Activated CD4-positive, alpha-beta memory T cell treated with anti-CD3 and anti-CD28 coated beads for 36 hours (primary cell): ENCODE measurements at regions of chr12 and their contacts with region 1.

Region 1: GRCh38 chr12:104286538-104287482 is 16.7 kb upstream of the EID3 start:
- DNase-seq: peak; percentile 94
- H3K4me3 Mint-ChIP-seq: peak overlapping the region; percentile 98
- H3K27ac Mint-ChIP-seq: peak overlapping the region; percentile 99
- H3K4me1 Mint-ChIP-seq: peaks cover 16% of the 10 kb centered on the region
- H3K27me3 Mint-ChIP-seq: no peaks in the 10 kb centered on the region

Region 2: DNA sequence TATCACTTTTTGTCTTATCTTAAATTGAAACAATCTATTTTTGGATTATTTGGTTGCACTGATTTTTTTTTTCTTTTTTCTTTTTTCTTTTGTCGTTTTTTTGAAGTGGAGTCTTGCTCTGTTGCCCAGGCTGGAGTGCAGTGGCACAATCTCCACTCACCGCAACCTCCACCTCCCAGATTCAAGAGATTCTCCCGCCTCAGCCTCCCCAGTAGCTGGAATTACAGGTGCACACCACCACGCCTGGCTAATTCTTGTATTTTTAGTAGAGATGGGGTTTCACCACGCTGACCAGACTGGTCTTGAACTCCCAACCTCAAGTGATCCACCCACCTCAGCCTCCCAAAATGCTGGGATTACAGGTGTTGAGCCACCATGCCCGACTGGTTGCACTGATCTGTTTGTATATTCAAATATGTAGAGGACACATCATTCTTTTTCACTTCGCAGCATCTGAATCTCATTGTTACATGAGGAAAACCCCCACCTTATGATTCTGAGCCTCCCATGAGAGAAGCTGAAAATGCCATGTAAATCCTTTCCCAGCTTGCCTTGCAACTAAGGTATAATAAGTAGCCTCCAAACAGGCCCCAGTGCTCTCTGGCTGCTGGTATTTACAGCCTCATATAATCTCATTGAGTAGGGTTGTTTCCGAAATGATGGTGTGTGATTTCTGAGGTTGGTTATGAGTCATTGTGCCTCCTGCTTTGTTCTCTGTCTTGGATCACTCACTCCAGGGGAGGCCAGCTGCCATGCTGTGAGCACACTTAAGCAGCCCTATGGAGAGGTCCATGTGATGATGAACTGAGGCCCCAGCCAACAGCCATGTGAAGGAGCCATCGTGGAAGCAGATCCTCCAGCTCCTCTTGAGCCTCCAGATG is 361.8 kb before region 1 on chr12:
- CTCF ChIA-PET with region 1: no interaction called
- POLR2A ChIA-PET with region 1: interaction called, 6 read pairs
- intact Hi-C with region 1: loop called (anchors 1 kb)
- DNase-seq: peak; percentile 80
- H3K4me3 Mint-ChIP-seq: peak overlapping the region; percentile 78
- H3K27ac Mint-ChIP-seq: peak overlapping the region; percentile 94
- H3K4me1 Mint-ChIP-seq: peaks cover 39% of the 10 kb centered on the region
- H3K27me3 Mint-ChIP-seq: no peaks in the 10 kb centered on the region

Region 3: DNA sequence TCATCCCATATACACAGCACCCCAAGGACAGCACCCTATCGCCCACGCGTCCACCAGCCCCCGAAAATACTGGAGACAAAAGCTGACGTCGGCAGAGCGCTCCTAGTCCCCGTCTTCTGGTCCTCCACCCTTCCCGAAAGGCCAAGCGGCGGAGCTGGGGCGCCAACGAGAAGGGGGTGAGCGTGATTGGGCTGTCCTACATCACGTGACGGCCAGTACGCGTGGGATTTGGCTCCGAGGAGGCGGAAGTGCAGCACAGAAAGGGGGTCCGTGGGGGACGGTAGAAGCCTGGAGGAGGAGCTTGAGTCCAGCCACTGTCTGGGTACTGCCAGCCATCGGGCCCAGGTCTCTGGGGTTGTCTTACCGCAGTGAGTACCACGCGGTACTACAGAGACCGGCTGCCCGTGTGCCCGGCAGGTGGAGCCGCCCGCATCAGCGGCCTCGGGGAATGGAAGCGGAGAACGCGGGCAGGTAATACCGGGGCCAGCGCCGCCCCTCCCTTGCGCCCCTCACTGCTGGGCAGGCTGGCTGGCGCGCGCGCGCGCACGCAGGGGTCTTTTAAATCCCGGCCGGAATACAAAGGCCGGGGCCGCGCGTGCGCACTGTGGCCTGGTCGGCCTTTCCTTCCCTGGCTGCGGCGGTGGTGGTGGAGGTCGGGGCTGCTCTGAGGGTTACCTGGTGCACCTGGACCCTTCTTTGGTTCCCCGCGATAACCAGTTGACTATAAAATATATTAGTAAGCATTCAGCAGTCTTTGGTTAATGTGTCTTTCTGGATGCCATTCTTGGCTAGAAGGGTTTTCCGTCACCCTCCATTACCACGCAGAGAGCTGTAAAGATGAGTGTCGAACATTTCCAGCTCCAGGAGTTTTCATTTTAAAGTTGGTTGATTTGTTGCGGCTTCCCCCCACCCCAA is 321.0 kb before region 1 on chr12 and contains the start of gene TDG:
- CTCF ChIA-PET with region 1: interaction called, 3 read pairs
- POLR2A ChIA-PET with region 1: interaction called, 3 read pairs
- intact Hi-C with region 1: loop called (anchors 5 kb)
- DNase-seq: peak; percentile 99
- H3K4me3 Mint-ChIP-seq: peak within 1 kb of the TSS; percentile 96
- H3K27ac Mint-ChIP-seq: peak within 1 kb of the TSS; percentile 96
- H3K4me1 Mint-ChIP-seq: peaks cover 53% of the 10 kb centered on the region
- H3K27me3 Mint-ChIP-seq: no peaks in the 10 kb centered on the region
- total RNA-seq, gene TDG: 29.1 to 29.7 TPM

Region 4: DNA sequence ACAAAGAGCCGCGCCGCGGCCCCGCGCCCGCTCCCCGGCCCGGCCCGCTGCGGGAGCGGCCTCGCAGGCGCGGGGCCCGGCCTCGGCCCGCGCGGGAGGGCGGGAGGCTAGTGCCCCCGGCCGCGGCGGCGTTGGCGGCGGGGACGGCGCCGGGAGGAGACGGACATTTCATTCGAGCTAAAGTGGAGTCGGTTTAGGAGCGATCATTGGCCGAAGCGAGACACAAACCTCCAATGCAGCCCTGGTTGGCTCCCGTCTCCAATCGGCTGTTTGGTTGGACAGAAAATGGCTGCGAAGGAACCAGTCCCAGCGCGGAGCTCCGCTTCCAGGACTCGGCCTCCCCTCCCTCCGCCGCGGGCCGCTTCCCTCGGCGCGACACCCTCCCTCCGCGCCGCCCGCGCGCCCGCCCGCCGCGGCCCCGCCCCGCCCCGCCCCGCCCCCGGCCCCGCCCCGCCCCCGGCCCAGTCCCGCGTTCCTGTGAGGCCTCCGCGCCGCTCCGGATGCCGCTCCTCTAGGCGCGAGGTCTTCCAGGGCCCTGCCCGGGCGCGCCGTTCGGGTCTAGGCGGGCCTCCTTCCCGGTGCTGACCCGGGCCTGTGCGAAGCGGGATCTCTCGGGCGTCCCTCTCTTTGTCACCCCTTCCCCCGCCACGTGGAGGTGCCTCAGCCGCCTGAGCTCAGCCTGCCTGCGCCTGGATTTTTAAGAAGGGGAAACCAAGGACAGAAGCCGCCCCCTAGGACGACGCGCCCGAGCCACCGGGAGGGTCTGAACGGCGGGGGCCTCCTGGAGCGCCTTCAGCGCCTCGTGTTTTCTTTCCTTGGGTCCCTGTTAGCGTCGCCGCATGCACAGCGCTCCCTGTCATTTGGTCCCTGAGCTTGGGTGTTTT is 148.7 kb before region 1 on chr12 and contains the start of gene NFYB:
- CTCF ChIA-PET with region 1: no interaction called
- POLR2A ChIA-PET with region 1: interaction called, 11 read pairs
- intact Hi-C with region 1: loop called (anchors 2 kb)
- DNase-seq: peak; percentile 95
- H3K4me3 Mint-ChIP-seq: peak within 1 kb of the TSS; percentile 83
- H3K27ac Mint-ChIP-seq: peak within 1 kb of the TSS; percentile 84
- H3K4me1 Mint-ChIP-seq: peaks cover 13% of the 10 kb centered on the region
- H3K27me3 Mint-ChIP-seq: no peaks in the 10 kb centered on the region
- total RNA-seq, gene NFYB: 23.6 to 24.5 TPM

Region 5: GRCh38 chr12:104303538-104304151 is 16.8 kb after region 1 on chr12 and contains the start of gene EID3:
- CTCF ChIA-PET with region 1: interaction called, 20 read pairs
- POLR2A ChIA-PET with region 1: interaction called, 46 read pairs
- intact Hi-C with region 1: loop called (anchors 1 kb)
- DNase-seq: peak; percentile 94
- H3K4me3 Mint-ChIP-seq: peak within 1 kb of the TSS; percentile 89
- H3K27ac Mint-ChIP-seq: peak within 1 kb of the TSS; percentile 93
- H3K4me1 Mint-ChIP-seq: peaks cover 60% of the 10 kb centered on the region
- H3K27me3 Mint-ChIP-seq: no peaks in the 10 kb centered on the region
- total RNA-seq, gene EID3: 4.7 TPM

Region 6: DNA sequence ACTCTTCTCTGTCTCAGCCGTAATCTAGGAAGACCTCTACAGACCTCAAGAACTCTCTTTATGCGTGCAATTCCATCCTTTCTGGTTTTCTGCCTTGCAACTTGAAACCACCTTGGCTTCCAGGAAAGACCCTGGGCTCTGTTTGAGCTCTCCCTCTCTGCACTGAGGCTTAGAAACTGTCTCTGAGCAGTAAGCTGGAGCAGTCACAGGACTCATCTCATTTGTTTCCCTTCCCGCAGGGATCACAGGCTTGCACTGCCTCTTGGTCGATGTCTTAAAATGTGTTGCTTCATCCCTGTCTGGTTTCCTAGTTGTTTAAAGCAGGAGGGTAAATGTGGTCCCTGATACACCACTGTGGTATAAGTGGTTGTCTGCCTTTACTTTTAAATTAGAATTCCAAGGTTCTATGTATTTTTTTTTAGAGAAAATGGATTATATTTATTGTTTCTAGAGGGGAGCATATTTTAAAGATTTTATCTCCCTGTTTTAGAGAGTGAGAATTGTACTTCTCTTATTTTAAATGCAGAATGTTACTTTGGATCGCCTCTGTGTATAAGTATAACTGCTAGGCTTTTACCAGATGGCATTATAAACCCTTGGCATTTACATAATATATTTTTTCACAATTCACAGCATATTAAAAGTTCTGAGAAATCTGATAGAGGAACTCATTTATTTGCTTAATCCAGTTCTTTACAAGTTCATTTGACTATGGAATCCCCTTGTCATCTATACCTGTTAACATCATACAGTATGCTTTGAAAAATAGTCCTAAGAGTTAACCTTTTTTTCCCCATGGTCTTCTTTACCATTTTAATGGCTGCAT is 43.1 kb after region 1 on chr12:
- CTCF ChIA-PET with region 1: no interaction called
- POLR2A ChIA-PET with region 1: no interaction called
- intact Hi-C with region 1: no loop called
- DNase-seq: no peak
- H3K4me3 Mint-ChIP-seq: no peak overlapping the region
- H3K27ac Mint-ChIP-seq: no peak overlapping the region
- H3K4me1 Mint-ChIP-seq: no peaks in the 10 kb centered on the region
- H3K27me3 Mint-ChIP-seq: no peaks in the 10 kb centered on the region

Region 7: GRCh38 chr12:104456417-104456949 is 169.7 kb after region 1 on chr12 and contains the start of gene CHST11:
- CTCF ChIA-PET with region 1: no interaction called
- POLR2A ChIA-PET with region 1: interaction called, 3 read pairs
- intact Hi-C with region 1: loop called (anchors 5 kb)
- DNase-seq: peak; percentile 89
- H3K4me3 Mint-ChIP-seq: peak within 1 kb of the TSS; percentile 99
- H3K27ac Mint-ChIP-seq: peak within 1 kb of the TSS; percentile 97
- H3K4me1 Mint-ChIP-seq: peaks cover 29% of the 10 kb centered on the region
- H3K27me3 Mint-ChIP-seq: no peaks in the 10 kb centered on the region
- total RNA-seq, gene CHST11: 58.3 to 59.0 TPM